ENCODE measurements at regions of chr3 and their contacts with region 1.

Region 1: DNA sequence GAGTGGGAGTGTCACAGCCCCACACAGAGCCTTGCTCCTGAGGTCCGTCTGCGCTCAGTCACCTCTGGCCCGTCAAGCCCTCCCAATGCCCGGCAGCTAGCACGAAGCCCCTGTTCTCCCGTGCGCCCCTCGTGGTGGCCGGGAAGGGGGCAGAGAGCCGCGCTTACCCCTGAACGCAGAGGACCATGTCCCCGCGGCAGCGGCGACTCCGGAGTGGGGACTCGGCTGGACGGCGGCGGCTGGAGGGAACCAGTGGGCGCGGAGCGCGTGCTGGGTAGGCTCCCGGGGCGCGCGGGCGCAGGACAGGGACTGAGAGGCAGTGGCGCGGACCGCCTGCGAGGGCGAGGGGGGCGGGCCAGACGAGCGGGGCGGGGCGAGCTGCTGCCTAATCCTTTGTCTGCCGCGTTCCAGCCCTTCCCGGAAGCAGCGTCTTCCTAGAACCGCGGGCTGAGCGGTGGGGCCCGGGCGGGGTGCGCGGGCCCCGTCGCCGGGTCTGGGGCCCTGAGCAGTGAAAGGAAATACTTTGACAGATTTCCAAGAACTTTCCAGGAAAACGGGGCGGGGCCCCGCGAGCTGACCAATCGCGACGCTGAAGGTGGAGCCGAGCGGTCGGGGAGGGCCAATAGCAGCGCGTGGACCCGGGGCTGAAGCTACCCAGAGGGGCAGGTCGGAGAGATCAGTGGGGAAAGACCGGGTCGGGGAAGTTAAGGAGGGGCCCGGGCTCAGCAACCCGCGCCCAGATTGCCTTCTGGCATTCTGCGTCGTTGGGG is at the start of gene CISH:
- H3K4me3 Mint-ChIP-seq: peak within 1 kb of the TSS; percentile 99
- H3K27ac Mint-ChIP-seq: peak within 1 kb of the TSS; percentile 99
- H3K4me1 Mint-ChIP-seq: peaks cover 56% of the 10 kb centered on the region
- H3K27me3 Mint-ChIP-seq: no peaks in the 10 kb centered on the region

Region 2: DNA sequence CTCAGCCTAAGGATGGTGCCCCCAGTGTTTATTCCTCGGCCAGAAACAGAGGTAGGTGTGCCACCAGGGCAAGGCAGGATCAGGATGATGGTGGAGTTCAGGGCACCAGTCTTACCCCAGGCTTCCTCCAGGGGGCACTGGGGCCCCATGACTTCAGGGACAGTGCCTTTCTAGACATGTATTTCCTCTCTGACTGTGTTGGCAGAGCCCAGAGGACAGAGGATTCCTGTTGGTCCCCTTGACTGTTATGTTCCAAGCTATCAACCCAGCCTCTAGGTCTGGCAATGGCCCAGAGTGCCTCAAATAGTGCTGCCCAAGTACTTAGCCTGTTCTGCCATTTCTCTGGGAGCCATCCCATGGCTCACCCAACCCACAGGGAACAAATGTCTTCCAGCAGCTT is 39.5 kb before region 1 on chr3:
- intact Hi-C with region 1: loop called (anchors 1 kb)
- H3K4me3 Mint-ChIP-seq: peak overlapping the region; percentile 26
- H3K27ac Mint-ChIP-seq: peak overlapping the region; percentile 97
- H3K4me1 Mint-ChIP-seq: peaks cover 80% of the 10 kb centered on the region
- H3K27me3 Mint-ChIP-seq: no peaks in the 10 kb centered on the region

Region 3: DNA sequence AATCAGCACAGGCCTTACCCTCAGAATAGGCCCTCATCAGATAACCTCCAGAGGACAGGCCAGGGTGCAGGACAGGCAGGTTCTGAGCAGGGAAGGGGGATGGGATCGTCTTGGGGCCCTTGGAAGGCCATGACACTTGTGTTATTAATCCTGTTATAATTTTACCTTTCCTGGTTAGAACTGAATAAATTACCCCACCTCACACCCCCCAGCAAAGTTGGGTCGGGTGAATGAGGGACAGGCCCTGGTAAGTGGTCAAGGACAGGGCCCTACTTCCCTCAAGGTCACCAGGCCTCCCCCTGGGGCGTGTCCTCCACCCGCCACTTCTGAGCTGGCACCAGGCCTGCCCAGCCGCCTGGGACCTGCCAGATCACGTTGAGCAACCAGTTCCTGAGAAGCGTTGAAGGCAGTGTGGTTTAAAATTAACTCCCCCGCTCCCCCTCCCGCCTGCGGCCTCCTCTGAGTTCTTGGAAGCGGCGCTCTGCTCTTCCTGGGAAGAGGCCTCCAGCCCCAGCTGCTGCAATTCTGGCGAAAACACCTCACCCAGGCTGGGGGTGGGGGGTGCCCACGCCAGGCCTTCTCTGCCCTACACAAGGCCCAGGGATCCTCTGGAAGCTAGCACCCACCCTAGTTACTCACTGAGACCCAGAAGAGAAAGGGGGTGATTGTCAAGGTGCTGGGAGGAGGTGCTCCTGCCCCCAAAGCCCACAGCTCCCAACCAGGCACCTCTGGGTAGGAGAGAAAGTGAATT is 10.6 kb before region 1 on chr3:
- intact Hi-C with region 1: loop called (anchors 1 kb)
- H3K4me3 Mint-ChIP-seq: peak overlapping the region; percentile 33
- H3K27ac Mint-ChIP-seq: peak overlapping the region; percentile 99
- H3K4me1 Mint-ChIP-seq: peaks cover 83% of the 10 kb centered on the region
- H3K27me3 Mint-ChIP-seq: no peaks in the 10 kb centered on the region

Region 4: DNA sequence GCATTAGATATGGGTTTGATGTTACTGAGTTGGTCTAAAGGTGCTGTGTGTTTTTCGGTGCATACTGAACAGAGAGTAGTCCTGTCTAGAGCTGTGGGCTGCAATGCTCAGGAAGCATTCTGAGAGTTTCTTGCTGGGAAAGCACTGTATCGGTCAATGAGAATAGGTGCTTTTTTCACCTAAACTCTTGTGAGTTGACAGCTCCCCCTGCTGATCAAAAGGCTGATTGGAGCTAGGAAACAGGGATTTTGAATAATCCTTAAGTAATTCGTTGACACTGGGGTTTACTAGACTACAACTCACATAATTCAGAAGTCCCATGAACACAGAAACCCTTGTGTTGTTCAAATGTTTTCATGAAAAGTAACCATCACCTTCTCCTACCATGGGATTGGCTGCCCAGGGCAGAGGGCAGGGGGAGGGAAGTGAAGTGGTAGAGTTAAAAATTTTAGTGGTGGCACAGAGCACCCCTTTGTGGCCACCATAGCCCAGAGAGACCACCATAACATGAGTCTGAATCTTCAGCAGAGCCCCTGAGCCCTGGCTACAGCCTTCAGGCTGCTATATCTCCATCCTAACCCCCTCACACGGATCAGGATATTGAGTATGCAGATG is 760.4 kb after region 1 on chr3:
- intact Hi-C with region 1: loop called (anchors 1 kb)
- H3K4me3 Mint-ChIP-seq: no peak overlapping the region
- H3K27ac Mint-ChIP-seq: no peak overlapping the region
- H3K4me1 Mint-ChIP-seq: no peaks in the 10 kb centered on the region
- H3K27me3 Mint-ChIP-seq: peaks cover 3% of the 10 kb centered on the region

Measured in dendritic cell treated with granulocyte-macrophage colony-stimulating factor and Interleukin-4, amounts not matched to agents 40 ng/mL and 50 ng/mL, for 4 days (primary cell).